Heart left ventricle (tissue), 16 donors: ENCODE measurements at regions of chr1 and their contacts with region 1.

Region 1: GRCh38 chr1:112882271-112882744 is 73.7 kb downstream of the SLC16A1 start:
- DNase-seq: peak in 3 of 5 donors; percentile 24 to 36 (median 26)
- ATAC-seq: peak; percentile 39 to 59 (median 46)
- H3K4me3 ChIP-seq: no peak overlapping the region
- H3K27ac ChIP-seq: peak overlapping the region in 9 of 12 donors; percentile 41 to 79 (median 59)
- H3K4me1 ChIP-seq: peaks cover 0 to 18% (median 11%) of the 10 kb centered on the region in 12 donors
- H3K27me3 ChIP-seq: no peaks in the 10 kb centered on the region
- CTCF ChIP-seq: no peak
- POLR2A ChIP-seq: no peak

Region 2: DNA sequence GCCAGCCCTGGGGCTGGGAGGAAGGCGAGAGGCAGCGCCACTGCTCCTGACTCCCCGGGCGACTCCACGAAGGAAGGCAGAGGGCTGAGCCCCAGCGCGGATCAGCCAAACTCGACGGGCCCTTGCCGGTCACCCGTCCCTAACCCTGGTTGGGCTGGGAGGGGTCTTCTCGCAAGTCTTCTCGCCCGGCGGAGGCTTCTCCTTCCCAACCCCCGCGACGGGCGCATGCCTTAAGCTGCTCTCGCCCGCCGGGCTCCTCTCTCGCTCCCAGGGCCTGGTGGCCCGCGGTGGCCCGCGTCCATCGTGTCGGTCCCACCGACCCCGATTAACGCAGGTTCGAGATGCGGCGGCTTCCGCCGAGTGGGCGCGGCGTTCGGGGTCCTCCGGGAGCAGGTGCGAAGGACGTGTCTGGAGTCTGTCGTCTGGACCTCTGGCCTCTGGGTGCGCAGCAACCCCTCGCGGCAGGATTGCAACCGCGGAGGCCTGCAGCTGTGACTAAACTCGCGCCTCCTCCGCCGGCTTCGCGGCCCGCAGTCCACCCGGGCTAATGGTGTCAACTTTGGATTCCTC is 138.2 kb before region 1 on chr1:
- intact Hi-C with region 1: no loop called
- DNase-seq: peak in 4 of 5 donors; percentile 29 to 70 (median 46)
- ATAC-seq: peak in 3 of 4 donors; percentile 66 to 91 (median 77)
- H3K4me3 ChIP-seq: peak overlapping the region in 8 of 12 donors; percentile 15 to 46 (median 28)
- H3K27ac ChIP-seq: no peak overlapping the region
- H3K4me1 ChIP-seq: peaks cover 0 to 15% (median 7%) of the 10 kb centered on the region in 12 donors
- H3K27me3 ChIP-seq: peaks cover 0 to 56% (median 23%) of the 10 kb centered on the region in 9 donors
- CTCF ChIP-seq: peak in 9 of 12 donors; percentile 11 to 50 (median 33)
- POLR2A ChIP-seq: no peak

Region 3: GRCh38 chr1:112809253-112809684 is 73.0 kb before region 1 on chr1:
- intact Hi-C with region 1: loop called in 1 of 10 experiments (anchors 5 kb)
- DNase-seq: peak; percentile 64 to 86 (median 74)
- ATAC-seq: peak; percentile 75 to 84 (median 80)
- H3K4me3 ChIP-seq: no peak overlapping the region
- H3K27ac ChIP-seq: no peak overlapping the region
- H3K4me1 ChIP-seq: peaks cover 0 to 12% (median 3%) of the 10 kb centered on the region in 12 donors
- H3K27me3 ChIP-seq: no peaks in the 10 kb centered on the region
- CTCF ChIP-seq: peak; percentile 69 to 91 (median 84)
- POLR2A ChIP-seq: no peak

Region 4: DNA sequence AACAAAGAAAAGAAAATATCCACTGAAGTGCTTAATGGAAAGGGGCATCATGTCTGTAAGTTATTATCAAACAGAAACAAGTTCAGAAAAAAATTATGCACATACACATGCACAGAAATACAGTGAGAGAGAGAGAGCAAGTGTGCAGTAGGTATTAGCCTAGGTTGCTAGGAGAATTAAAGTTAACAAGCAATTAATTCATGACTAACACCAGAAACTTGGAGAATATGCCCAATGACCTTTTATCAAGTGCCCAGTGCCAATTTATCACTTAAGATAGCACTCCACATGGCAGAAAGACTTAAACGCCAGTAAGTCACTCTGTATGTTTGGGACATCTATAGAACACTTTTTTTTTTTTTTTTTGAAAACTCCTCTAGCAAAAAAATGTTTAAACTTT is 129.8 kb after region 1 on chr1:
- intact Hi-C with region 1: no loop called
- DNase-seq: no peak
- ATAC-seq: peak in 1 of 4 donors; percentile 36
- H3K4me3 ChIP-seq: no peak overlapping the region
- H3K27ac ChIP-seq: no peak overlapping the region
- H3K4me1 ChIP-seq: peaks cover 0 to 7% (median 0%) of the 10 kb centered on the region in 12 donors
- H3K27me3 ChIP-seq: no peaks in the 10 kb centered on the region
- CTCF ChIP-seq: no peak
- POLR2A ChIP-seq: no peak